CD4-positive, alpha-beta T cell (primary cell): ENCODE measurements at regions of chr2 and their contacts with region 1.

Region 1: GRCh38 chr2:73828818-73829570 is at the start of gene STAMBP:
- DNase-seq: peak; percentile 78 to 97 (median 88)
- ATAC-seq: peak; percentile 90
- H3K4me3 ChIP-seq: peak within 1 kb of the TSS; percentile 83
- H3K4me3 Mint-ChIP-seq: peak within 1 kb of the TSS; percentile 98
- H3K27ac ChIP-seq: peak within 1 kb of the TSS; percentile 90 to 97
- H3K27ac Mint-ChIP-seq: peak within 1 kb of the TSS; percentile 95
- H3K4me1 ChIP-seq: peaks cover 25% of the 10 kb centered on the region
- H3K4me1 Mint-ChIP-seq: peaks cover 60% of the 10 kb centered on the region
- H3K27me3 ChIP-seq: no peaks in the 10 kb centered on the region
- H3K27me3 Mint-ChIP-seq: no peaks in the 10 kb centered on the region
- CTCF ChIP-seq: no peak
- total RNA-seq, gene STAMBP: 11.3 to 13.8 TPM

Region 2: DNA sequence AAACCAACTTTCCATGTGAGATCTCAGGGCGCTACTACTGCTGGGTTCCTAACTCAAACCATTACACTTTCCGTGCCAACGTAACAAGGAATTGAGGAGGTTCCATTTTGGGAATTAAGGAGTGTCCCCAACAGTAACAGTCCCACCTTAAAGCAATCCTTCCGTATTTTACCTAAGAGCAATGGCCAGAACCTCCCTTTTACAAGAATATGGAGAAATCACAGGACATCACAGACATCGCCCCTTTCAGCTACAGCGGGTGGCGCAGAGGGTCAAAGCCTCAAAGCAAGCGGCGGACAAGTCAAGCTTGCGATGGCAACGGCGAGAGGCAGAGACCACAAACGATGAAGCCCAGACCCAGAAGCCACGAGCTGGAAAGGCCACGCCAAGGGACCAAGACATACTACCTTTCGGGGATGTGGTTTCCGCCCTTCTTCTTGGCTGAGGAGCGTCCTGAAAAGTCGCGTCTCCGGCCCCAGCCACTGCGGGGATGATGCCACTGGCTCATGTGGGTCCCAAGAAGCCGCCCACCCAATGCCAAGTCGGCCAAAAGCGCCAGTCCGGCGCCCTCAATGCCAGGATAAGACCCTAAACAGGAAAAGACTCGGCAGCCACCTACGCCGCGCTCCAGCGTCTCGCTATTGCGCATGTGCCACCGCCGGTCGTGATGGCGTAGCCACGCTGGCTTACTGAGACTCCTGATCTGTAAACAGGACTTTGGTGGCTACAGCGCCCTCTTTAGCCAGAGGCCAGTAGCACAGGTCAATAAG is 49.3 kb before region 1 on chr2 and contains the start of gene DUSP11:
- CTCF ChIA-PET with region 1: interaction called, 6 read pairs
- POLR2A ChIA-PET with region 1: interaction called, 3 read pairs
- intact Hi-C with region 1: loop called in 1 of 2 experiments (anchors 1 kb)
- DNase-seq: peak; percentile 93 to 98 (median 96)
- ATAC-seq: peak; percentile 99
- H3K4me3 ChIP-seq: peak within 1 kb of the TSS; percentile 95
- H3K4me3 Mint-ChIP-seq: peak within 1 kb of the TSS; percentile 99
- H3K27ac ChIP-seq: peak within 1 kb of the TSS; percentile 85 to 91
- H3K27ac Mint-ChIP-seq: peak within 1 kb of the TSS; percentile 97
- H3K4me1 ChIP-seq: peaks cover 14% of the 10 kb centered on the region
- H3K4me1 Mint-ChIP-seq: peaks cover 45% of the 10 kb centered on the region
- H3K27me3 ChIP-seq: no peaks in the 10 kb centered on the region
- H3K27me3 Mint-ChIP-seq: peaks cover 11% of the 10 kb centered on the region
- CTCF ChIP-seq: peak; percentile 90
- total RNA-seq, gene DUSP11: 57.1 to 61.5 TPM

Region 3: DNA sequence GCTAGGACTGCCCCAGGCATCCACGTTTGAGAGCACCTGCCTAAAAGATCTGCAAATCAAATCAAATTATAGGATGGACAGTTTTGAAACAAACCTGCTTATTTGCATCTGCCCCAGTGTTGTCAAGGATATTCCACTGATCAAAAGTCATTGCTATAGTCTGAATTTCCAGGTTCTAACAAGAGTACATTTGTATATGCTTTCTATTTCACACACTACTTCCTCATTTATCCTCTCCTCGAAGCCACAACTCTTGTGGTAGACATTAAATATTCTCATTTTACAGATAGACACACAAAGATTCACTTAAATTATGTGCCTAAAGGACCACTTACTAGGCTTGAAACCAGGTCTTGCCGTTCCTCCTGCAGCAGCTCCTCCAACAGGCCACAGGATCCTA is 143.9 kb after region 1 on chr2:
- CTCF ChIA-PET with region 1: no interaction called
- POLR2A ChIA-PET with region 1: no interaction called
- intact Hi-C with region 1: no loop called
- DNase-seq: no peak
- ATAC-seq: no peak
- H3K4me3 ChIP-seq: no peak overlapping the region
- H3K4me3 Mint-ChIP-seq: no peak overlapping the region
- H3K27ac ChIP-seq: no peak overlapping the region
- H3K27ac Mint-ChIP-seq: peak overlapping the region; percentile 96
- H3K4me1 ChIP-seq: peaks cover 50% of the 10 kb centered on the region
- H3K4me1 Mint-ChIP-seq: peaks cover 84% of the 10 kb centered on the region
- H3K27me3 ChIP-seq: no peaks in the 10 kb centered on the region
- H3K27me3 Mint-ChIP-seq: no peaks in the 10 kb centered on the region
- CTCF ChIP-seq: no peak

Region 4: DNA sequence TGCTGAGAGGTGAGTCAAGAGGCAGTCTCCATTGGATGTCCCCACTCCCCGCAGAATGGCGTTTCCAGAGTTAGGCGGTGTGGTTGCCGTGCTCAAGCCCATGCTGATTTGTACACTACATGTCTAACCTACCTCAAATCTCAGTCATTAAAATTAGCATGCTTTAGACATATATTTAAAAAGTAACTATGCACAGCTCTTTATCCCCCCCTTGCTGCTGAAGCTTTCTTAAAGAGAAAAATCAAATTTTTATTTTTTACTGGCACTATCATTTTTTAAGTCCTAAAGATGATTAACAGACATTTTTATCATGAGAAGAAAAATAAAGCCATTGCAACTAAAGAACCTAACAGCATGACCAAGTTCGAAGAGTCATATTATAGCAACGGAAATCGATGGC is 275.8 kb after region 1 on chr2:
- CTCF ChIA-PET with region 1: interaction called, 3 read pairs
- POLR2A ChIA-PET with region 1: no interaction called
- intact Hi-C with region 1: loop called (anchors 1 to 10 kb)
- DNase-seq: peak in 2 of 14 experiments; percentile 23 to 28
- ATAC-seq: peak; percentile 49
- H3K4me3 ChIP-seq: no peak overlapping the region
- H3K4me3 Mint-ChIP-seq: no peak overlapping the region
- H3K27ac ChIP-seq: no peak overlapping the region
- H3K27ac Mint-ChIP-seq: no peak overlapping the region
- H3K4me1 ChIP-seq: no peaks in the 10 kb centered on the region
- H3K4me1 Mint-ChIP-seq: no peaks in the 10 kb centered on the region
- H3K27me3 ChIP-seq: no peaks in the 10 kb centered on the region
- H3K27me3 Mint-ChIP-seq: no peaks in the 10 kb centered on the region
- CTCF ChIP-seq: no peak

Region 5: DNA sequence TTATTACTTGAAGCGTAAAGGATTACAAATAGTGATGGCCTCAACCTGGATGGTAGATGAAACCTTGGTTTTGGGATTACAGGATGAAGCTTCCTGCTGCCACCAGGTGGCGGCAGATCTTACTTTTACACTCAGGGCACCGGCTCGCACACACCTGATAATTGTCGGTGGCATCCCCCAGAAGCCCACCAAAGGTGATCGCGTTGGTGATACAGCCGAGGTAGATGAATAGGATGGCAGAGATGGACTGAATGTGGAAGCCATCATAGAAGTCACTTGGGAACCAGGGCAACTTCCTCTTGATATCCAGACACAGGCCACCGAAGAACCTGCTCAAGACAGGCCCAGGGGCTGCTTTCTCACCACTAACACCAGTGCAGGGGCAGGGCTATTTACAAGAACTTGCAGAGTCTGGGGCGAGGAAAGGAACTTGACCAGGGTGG is 421.2 kb after region 1 on chr2:
- CTCF ChIA-PET with region 1: interaction called, 6 read pairs
- POLR2A ChIA-PET with region 1: no interaction called
- intact Hi-C with region 1: loop called in 1 of 2 experiments (anchors 10 kb)
- DNase-seq: peak; percentile 27 to 79 (median 46)
- ATAC-seq: peak; percentile 56
- H3K4me3 ChIP-seq: no peak overlapping the region
- H3K4me3 Mint-ChIP-seq: no peak overlapping the region
- H3K27ac ChIP-seq: no peak overlapping the region
- H3K27ac Mint-ChIP-seq: no peak overlapping the region
- H3K4me1 ChIP-seq: peaks cover 5% of the 10 kb centered on the region
- H3K4me1 Mint-ChIP-seq: no peaks in the 10 kb centered on the region
- H3K27me3 ChIP-seq: no peaks in the 10 kb centered on the region
- H3K27me3 Mint-ChIP-seq: no peaks in the 10 kb centered on the region
- CTCF ChIP-seq: peak; percentile 84

Region 6: DNA sequence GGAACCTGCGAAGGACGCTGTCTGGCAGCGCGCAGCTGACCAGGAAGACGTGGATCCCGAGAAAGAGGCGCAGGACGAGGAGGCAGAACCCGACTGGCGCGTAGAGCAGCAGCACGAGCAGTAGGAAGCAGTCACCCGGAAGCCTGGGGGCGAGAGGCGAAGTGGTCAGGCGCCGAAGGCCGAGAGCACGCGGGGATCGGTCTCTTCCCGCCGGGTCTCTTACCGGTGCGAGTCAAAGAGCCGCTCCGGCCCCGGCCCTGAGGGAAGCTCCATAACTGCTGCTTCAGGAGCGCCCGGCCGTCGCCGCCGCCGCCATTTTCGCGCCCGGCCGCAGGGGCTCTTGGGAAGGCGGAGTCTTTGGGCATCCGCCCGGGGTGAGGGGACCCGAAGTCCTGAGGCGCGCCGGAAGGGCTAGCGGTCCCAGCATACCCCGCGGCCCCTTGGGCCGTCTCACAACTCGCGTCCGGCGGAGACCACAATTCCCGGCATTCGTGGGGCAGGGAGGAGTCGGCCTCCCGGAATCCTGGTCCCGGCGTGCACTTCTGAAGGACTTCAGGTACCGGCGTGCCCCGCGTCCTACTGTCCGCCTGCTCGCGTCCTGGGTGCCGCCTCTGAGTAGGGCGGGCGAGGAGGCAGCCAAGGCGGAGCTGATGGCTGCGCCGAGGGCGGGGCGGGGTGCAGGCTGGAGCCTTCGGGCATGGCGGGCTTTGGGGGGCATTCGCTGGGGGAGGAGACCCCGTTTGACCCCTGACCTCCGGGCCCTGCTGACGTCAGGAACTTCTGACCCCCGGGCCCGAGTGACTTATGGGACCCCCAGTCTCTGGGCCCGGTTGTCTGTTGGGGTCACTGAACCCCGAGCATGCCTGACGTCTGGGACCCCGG is 700.6 kb after region 1 on chr2 and contains the starts of genes AUP1 and HTRA2:
- CTCF ChIA-PET with region 1: no interaction called
- POLR2A ChIA-PET with region 1: interaction called, 3 read pairs
- intact Hi-C with region 1: loop called in 1 of 2 experiments (anchors 10 kb)
- DNase-seq: peak; percentile 69 to 94 (median 80)
- ATAC-seq: peak; percentile 90
- H3K4me3 ChIP-seq: peak within 1 kb of the TSS; percentile 84
- H3K4me3 Mint-ChIP-seq: peak within 1 kb of the TSS; percentile 92
- H3K27ac ChIP-seq: peak within 1 kb of the TSS; percentile 79 to 86
- H3K27ac Mint-ChIP-seq: peak within 1 kb of the TSS; percentile 89
- H3K4me1 ChIP-seq: peaks cover 35% of the 10 kb centered on the region
- H3K4me1 Mint-ChIP-seq: peaks cover 42% of the 10 kb centered on the region
- H3K27me3 ChIP-seq: no peaks in the 10 kb centered on the region
- H3K27me3 Mint-ChIP-seq: no peaks in the 10 kb centered on the region
- CTCF ChIP-seq: no peak
- total RNA-seq, gene AUP1: 162 to 170 TPM
- total RNA-seq, gene HTRA2: 15.3 to 16.0 TPM